Ovary (tissue), 10 donors: ENCODE measurements at regions of chr12 and their contacts with region 1.

Region 1: GRCh38 chr12:100234598-100235304 is 32.1 kb downstream of the DEPDC4 start:
- DNase-seq: no peak
- H3K4me3 ChIP-seq: no peak overlapping the region
- H3K27ac ChIP-seq: no peak overlapping the region
- H3K4me1 ChIP-seq: peaks cover 1% of the 10 kb centered on the region
- H3K27me3 ChIP-seq: no peaks in the 10 kb centered on the region
- CTCF ChIP-seq: peak; percentile 23 to 51 (median 47)
- EP300 ChIP-seq: no peak
- POLR2A ChIP-seq: no peak

Region 2: DNA sequence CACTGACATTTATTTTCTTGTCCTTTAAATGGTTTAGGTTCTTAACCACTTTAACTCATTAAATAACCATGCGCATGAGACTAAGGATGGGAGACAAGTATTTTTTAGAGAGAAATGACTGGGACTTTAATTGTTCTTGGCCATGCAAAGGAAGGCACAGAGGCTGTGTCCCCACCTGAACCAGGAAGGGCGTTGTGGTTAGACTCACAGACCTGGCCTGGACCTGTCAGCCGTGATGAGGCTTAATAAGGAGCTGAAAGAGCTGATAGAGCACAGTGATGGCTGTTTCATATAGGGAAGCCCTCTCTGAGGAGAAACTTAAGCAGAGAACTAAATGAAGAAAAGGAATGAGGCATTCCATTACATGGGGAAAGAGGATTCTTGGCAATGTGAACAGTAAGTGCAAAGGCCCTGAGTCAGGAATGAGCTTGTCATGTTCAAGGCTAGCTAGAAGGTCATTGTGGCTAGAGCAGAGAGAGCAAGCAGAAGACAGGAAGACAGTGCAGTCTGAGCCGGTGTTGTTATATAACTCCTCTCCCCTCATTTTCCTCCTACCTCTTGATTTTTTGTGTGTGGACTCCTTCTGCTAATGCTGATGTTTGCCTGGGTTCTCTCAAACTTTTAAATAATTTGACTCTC is 485.4 kb after region 1 on chr12:
- intact Hi-C with region 1: loop called in 1 of 4 experiments (anchors 10 kb)
- DNase-seq: no peak
- H3K4me3 ChIP-seq: no peak overlapping the region
- H3K27ac ChIP-seq: no peak overlapping the region
- H3K4me1 ChIP-seq: no peaks in the 10 kb centered on the region
- H3K27me3 ChIP-seq: no peaks in the 10 kb centered on the region
- CTCF ChIP-seq: no peak
- EP300 ChIP-seq: no peak
- POLR2A ChIP-seq: no peak

Region 3: GRCh38 chr12:100820314-100820713 is 585.6 kb after region 1 on chr12:
- intact Hi-C with region 1: no loop called
- DNase-seq: no peak
- H3K4me3 ChIP-seq: no peak overlapping the region
- H3K27ac ChIP-seq: no peak overlapping the region
- H3K4me1 ChIP-seq: no peaks in the 10 kb centered on the region
- H3K27me3 ChIP-seq: no peaks in the 10 kb centered on the region
- CTCF ChIP-seq: no peak
- EP300 ChIP-seq: no peak
- POLR2A ChIP-seq: no peak